Mammary epithelial cell (primary cell): ENCODE measurements at regions of chr10 and their contacts with region 1.

Region 1: GRCh38 chr10:43461950-43462349 is 25.0 kb downstream of the ZNF487 start:
- DNase-seq: peak; percentile 62
- H3K4me3 ChIP-seq: no peak overlapping the region
- H3K27ac ChIP-seq: no peak overlapping the region
- H3K4me1 ChIP-seq: no peaks in the 10 kb centered on the region
- H3K27me3 ChIP-seq: no peaks in the 10 kb centered on the region
- CTCF ChIP-seq: peak; percentile 53 to 66

Region 2: DNA sequence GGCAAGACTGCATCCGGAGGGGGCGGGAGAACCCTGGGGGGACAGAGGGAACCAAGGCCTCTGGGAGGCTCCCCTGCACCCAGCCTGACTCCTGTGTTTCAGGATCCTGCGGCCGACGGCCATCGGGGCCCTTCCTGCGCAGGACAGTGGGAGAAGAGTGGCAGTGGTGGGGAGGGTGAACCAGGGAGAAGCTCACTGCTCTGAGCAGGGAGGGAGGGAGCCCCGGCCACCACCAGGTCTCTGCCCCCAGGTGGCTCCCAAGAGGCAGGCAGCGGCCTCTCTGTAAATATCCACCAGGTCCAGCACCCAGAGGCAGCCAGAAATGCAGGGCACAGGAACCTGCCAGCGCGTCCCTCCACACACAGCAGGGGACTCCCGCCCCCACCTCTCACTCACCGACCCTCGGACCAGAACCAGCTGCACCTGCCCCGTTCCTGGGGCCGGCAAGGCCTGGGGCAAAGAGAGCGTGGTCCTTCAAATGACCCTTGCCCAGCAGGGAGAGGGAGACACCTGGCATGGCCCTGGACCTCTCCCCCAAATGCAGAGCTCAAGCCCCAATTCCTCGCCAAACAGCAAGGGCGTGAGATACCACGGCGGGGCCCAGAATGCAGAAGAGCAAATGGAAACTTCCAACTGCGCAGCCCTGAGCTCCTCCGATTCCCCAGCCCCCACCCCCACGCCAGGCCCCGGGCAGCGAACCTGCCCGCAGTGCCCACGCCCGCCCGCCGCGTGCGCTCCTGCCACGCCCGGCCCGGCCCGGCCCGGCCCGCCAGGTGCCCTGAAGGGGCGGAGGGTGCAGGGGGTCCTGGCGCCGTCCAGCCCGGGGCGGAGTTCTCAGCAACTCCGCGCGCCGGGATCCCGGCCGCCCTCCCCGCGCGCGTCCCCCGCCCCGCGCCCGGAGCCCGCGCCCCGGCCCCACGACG is 195.9 kb before region 1 on chr10:
- CTCF ChIA-PET with region 1: no interaction called
- dilution Hi-C with region 1: no loop called
- in situ Hi-C with region 1: no loop called
- intact Hi-C with region 1: loop called (anchors 10 kb)
- DNase-seq: peak; percentile 26
- H3K4me3 ChIP-seq: no peak overlapping the region
- H3K27ac ChIP-seq: no peak overlapping the region
- H3K4me1 ChIP-seq: peaks cover 5% of the 10 kb centered on the region
- H3K27me3 ChIP-seq: peaks cover 24% of the 10 kb centered on the region
- CTCF ChIP-seq: peak; percentile 31 to 48

Region 3: DNA sequence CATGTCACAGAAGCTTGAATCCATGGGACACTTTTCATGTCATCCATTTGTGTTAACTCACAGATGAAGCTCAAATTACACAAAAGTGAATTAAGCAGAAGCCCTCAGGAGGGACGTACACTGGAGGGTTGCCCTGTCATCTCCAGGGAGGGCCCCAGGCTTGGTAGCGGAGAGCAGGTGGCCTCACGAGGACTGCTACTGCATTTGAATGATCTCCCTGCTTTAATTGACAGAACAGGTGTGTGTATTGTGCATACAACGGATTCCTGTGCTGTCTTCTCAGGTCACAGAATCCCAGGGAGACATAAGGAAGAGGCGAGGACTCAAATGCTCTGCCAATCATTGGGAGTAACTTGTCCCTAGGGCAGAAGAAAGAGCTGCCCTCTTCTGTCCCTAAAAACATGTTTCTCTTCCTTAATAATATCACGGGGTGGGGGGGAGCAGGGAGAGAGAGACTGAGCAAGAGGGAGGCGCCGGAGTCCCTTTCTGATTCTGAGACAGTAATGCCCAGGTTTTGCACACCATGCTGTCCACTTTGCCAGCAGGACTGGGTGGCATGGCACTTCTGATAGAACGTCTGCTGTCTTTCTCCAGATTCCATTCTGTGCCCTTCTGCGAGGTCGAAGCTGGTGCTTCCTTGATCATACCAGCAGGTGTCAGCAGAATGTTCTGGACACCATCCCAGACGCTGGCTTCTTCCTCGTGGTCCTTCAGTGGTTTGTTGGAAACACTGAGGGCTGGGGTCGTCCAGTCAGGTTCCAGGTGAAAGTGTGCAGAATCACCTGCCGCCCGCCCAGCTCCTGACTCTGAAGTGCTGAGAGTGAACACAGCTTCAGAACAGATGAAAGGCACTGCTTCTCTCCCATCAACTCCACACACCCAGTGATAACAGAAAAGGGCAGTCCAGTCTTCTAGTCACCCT is 168.9 kb before region 1 on chr10:
- CTCF ChIA-PET with region 1: no interaction called
- dilution Hi-C with region 1: no loop called
- in situ Hi-C with region 1: loop called in 1 of 2 experiments (anchors 10 kb)
- intact Hi-C with region 1: loop called (anchors 1 kb)
- DNase-seq: peak; percentile 20
- H3K4me3 ChIP-seq: no peak overlapping the region
- H3K27ac ChIP-seq: no peak overlapping the region
- H3K4me1 ChIP-seq: peaks cover 1% of the 10 kb centered on the region
- H3K27me3 ChIP-seq: no peaks in the 10 kb centered on the region
- CTCF ChIP-seq: peak; percentile 68 to 79